Naive thymus-derived CD4-positive, alpha-beta T cell (primary cell): ENCODE measurements at regions of chr10 and their contacts with region 1.

Region 1: DNA sequence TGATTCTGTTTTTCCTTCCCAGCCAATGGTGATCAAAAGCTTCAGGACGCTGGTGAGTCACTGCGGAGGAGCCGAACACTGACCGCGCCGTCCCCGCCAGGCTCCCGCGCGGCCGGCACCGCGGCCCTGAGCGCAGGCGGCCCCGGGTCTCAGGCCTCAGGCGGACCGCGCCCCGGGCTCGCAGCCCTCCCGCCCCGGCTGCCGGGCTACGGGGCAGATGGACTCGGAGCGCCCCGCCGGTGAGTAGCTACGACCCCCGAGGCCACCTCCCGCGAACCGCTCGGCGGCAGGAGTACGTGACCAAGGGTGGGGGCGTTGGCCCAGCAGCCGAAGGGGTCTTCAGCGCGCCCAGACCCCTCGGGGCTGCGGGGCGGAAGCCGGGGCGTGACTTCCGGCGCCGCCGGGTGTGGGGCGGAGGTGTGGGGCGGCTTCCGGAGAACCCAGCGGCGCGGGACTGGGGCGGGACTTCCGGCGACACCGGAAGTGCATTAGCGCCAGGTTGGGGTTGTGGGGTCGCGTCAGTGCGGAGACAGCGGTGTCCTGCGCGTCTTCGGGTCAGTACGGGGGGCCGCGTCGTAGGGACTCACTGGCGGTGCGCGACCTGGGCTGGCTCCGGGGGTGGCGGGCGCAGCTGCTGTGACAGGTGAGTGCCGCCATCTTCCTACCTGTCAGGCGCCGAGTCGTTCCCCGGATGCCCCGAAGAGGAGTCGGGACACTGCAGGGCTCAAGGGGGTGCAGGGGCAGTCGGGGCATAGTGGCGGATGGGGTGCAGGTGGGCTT is at the start of gene WDR37:
- DNase-seq: peak; percentile 79 to 92 (median 87)
- ATAC-seq: peak; percentile 95
- H3K4me3 ChIP-seq: peak within 1 kb of the TSS; percentile 82
- H3K4me3 Mint-ChIP-seq: peak within 1 kb of the TSS; percentile 91 to 99 (median 94)
- H3K27ac ChIP-seq: peak within 1 kb of the TSS; percentile 88
- H3K27ac Mint-ChIP-seq: peak within 1 kb of the TSS; percentile 90 to 99 (median 93)
- H3K4me1 ChIP-seq: peaks cover 54 to 59% of the 10 kb centered on the region in 2 donors
- H3K4me1 Mint-ChIP-seq: peaks cover 52 to 90% (median 82%) of the 10 kb centered on the region in 7 donors
- H3K27me3 ChIP-seq: no peaks in the 10 kb centered on the region
- H3K27me3 Mint-ChIP-seq: no peaks in the 10 kb centered on the region
- total RNA-seq, gene WDR37: 30.3 to 52.6 (median 43.4) TPM

Region 2: DNA sequence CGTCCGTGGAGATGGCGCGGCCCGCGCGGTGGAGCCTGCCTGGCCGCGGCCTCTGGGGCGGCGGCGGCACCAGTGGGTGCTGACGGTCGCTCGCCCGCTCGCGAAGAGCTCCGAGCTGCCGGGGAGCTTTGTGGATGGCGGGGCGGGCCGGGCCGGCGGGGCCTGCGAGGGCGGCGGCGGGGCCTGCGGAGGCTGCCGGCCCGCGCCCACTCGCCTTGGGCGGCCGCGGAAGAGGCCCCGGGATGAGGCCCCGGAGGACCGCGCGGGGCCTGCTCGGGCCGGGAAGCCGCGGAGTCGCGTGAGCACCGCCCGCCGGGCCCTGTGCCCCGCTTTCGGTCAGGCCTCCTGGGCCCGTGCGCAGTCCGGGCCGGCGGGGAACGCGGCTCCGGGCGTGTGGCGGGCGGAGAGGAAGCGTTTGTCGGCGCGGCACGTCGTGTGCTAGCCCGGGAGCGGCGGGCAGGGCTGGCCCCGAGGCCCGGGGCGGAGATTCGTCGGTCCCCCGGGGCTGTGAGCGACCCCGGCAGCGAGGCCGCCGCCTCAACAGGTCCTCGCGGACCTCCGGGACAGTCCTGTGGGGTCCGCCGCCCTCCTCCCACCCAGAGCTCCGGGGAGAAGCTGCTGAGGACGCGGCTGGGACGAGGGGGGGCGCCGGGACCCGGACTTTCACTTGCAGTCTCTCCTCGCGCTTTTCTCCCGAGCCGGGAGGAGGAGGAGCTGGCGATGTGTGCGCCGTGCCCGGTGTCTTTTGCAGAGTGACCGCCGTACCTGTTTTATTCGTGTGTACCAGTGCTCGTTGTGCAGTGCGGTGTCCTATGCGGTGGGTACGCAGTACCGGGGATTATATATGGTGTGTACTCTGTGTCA is 920.7 kb before region 1 on chr10:
- CTCF ChIA-PET with region 1: interaction called, 4 read pairs
- POLR2A ChIA-PET with region 1: no interaction called
- intact Hi-C with region 1: loop called in 1 of 2 experiments (anchors 5 kb)
- DNase-seq: peak; percentile 54 to 77 (median 68)
- ATAC-seq: peak; percentile 67
- H3K4me3 ChIP-seq: peak overlapping the region; percentile 67
- H3K4me3 Mint-ChIP-seq: peak overlapping the region; percentile 86 to 96 (median 94)
- H3K27ac ChIP-seq: peak overlapping the region; percentile 90
- H3K27ac Mint-ChIP-seq: peak overlapping the region; percentile 82 to 96 (median 93)
- H3K4me1 ChIP-seq: peaks cover 16 to 17% of the 10 kb centered on the region in 2 donors
- H3K4me1 Mint-ChIP-seq: peaks cover 27 to 59% (median 49%) of the 10 kb centered on the region in 7 donors
- H3K27me3 ChIP-seq: no peaks in the 10 kb centered on the region
- H3K27me3 Mint-ChIP-seq: peaks cover 0 to 15% (median 0%) of the 10 kb centered on the region in 5 donors

Region 3: DNA sequence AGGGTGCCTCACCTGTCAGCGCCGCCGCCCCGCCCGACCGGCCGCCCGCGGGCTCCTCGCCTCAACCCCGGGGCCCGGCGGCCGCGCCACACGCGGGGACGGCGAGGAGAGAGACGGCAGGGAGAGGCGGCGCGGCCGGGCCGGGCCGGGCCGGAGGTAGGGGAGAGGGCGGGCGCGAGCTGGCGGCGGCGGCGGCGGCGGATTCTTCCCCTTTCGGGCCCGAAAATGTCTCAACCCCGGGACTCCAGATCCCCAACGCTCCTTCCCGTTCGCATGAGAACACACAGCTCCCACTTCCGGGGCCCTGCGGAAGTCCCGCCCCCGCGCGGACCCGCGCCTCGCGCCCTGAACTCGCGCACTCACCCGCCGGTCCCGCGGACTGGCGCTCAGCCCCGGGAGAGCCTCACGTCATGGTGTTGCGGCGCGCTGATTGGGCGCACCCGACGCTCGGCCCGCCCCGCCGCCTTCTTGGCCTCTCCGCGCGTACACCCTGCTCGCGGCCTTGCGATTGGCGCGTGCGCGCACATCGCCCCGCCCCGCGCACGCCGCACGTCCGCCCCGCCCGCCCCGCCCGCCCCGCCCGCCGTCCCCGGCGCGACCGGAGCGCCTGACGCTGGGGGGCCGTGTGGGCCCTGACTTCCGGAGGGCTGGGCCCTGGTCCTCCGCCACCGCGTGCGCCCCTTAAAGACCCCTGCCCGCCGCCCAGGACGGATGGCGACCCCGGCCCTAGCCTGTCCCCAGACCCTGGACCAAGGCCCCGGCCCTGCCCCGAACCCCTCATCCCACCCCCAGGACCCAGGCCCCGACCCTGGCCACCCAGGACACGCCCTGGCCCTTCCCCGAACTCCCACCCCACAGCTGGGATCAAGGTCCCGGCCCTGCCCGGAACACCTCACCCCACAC is 124.8 kb before region 1 on chr10 and contains the start of gene LARP4B:
- CTCF ChIA-PET with region 1: no interaction called
- POLR2A ChIA-PET with region 1: interaction called, 4 read pairs
- intact Hi-C with region 1: loop called in 1 of 2 experiments (anchors 1 kb)
- DNase-seq: peak; percentile 95 to 99 (median 98)
- ATAC-seq: peak; percentile 98
- H3K4me3 ChIP-seq: peak within 1 kb of the TSS; percentile 42
- H3K4me3 Mint-ChIP-seq: peak within 1 kb of the TSS; percentile 82 to 99 (median 94)
- H3K27ac ChIP-seq: peak within 1 kb of the TSS; percentile 96
- H3K27ac Mint-ChIP-seq: peak within 1 kb of the TSS; percentile 91 to 96 (median 94)
- H3K4me1 ChIP-seq: peaks cover 9 to 12% of the 10 kb centered on the region in 2 donors
- H3K4me1 Mint-ChIP-seq: peaks cover 26 to 48% (median 41%) of the 10 kb centered on the region in 7 donors
- H3K27me3 ChIP-seq: no peaks in the 10 kb centered on the region
- H3K27me3 Mint-ChIP-seq: no peaks in the 10 kb centered on the region
- total RNA-seq, gene LARP4B: 65.2 to 114 (median 96.9) TPM

Region 4: GRCh38 chr10:987870-988666 is 68.4 kb before region 1 on chr10 and contains the start of gene GTPBP4:
- CTCF ChIA-PET with region 1: interaction called, 3 read pairs
- POLR2A ChIA-PET with region 1: interaction called, 9 read pairs
- intact Hi-C with region 1: loop called (anchors 1 kb)
- DNase-seq: peak; percentile 88 to 98 (median 95)
- ATAC-seq: peak; percentile 99
- H3K4me3 ChIP-seq: peak within 1 kb of the TSS; percentile 90
- H3K4me3 Mint-ChIP-seq: peak within 1 kb of the TSS; percentile 95 to 98 (median 96)
- H3K27ac ChIP-seq: peak within 1 kb of the TSS; percentile 95
- H3K27ac Mint-ChIP-seq: peak within 1 kb of the TSS; percentile 88 to 99 (median 97)
- H3K4me1 ChIP-seq: peaks cover 18 to 19% of the 10 kb centered on the region in 2 donors
- H3K4me1 Mint-ChIP-seq: peaks cover 21 to 45% (median 40%) of the 10 kb centered on the region in 7 donors
- H3K27me3 ChIP-seq: no peaks in the 10 kb centered on the region
- H3K27me3 Mint-ChIP-seq: no peaks in the 10 kb centered on the region
- total RNA-seq, gene GTPBP4: 39.0 to 81.8 (median 45.2) TPM

Region 5: GRCh38 chr10:1043532-1043995 is 13.0 kb before region 1 on chr10:
- CTCF ChIA-PET with region 1: no interaction called
- POLR2A ChIA-PET with region 1: interaction called, 13 read pairs
- intact Hi-C with region 1: loop called (anchors 1 kb)
- DNase-seq: peak in 7 of 9 donors; percentile 22 to 51 (median 35)
- ATAC-seq: peak; percentile 49
- H3K4me3 ChIP-seq: peak overlapping the region; percentile 30
- H3K4me3 Mint-ChIP-seq: peak overlapping the region; percentile 70 to 86 (median 82)
- H3K27ac ChIP-seq: peak overlapping the region; percentile 54
- H3K27ac Mint-ChIP-seq: peak overlapping the region; percentile 68 to 96 (median 88)
- H3K4me1 ChIP-seq: peaks cover 27% of the 10 kb centered on the region in 2 donors
- H3K4me1 Mint-ChIP-seq: peaks cover 30 to 45% (median 42%) of the 10 kb centered on the region in 7 donors
- H3K27me3 ChIP-seq: no peaks in the 10 kb centered on the region
- H3K27me3 Mint-ChIP-seq: no peaks in the 10 kb centered on the region

Region 6: GRCh38 chr10:1074748-1075308 is 18.3 kb after region 1 on chr10:
- CTCF ChIA-PET with region 1: interaction called, 3 read pairs
- POLR2A ChIA-PET with region 1: interaction called, 3 read pairs
- intact Hi-C with region 1: loop called in 1 of 2 experiments (anchors 2 kb)
- DNase-seq: peak in 3 of 9 donors; percentile 7 to 23 (median 21)
- ATAC-seq: peak; percentile 34
- H3K4me3 ChIP-seq: no peak overlapping the region
- H3K4me3 Mint-ChIP-seq: peak overlapping the region in 1 of 10 donors; percentile 0
- H3K27ac ChIP-seq: no peak overlapping the region
- H3K27ac Mint-ChIP-seq: peak overlapping the region in 6 of 9 donors; percentile 9 to 83 (median 46)
- H3K4me1 ChIP-seq: peaks cover 3 to 4% of the 10 kb centered on the region in 2 donors
- H3K4me1 Mint-ChIP-seq: peaks cover 8 to 29% (median 21%) of the 10 kb centered on the region in 7 donors
- H3K27me3 ChIP-seq: no peaks in the 10 kb centered on the region
- H3K27me3 Mint-ChIP-seq: no peaks in the 10 kb centered on the region

Region 7: GRCh38 chr10:1142596-1142995 is 86.1 kb after region 1 on chr10:
- CTCF ChIA-PET with region 1: no interaction called
- POLR2A ChIA-PET with region 1: no interaction called
- intact Hi-C with region 1: no loop called
- DNase-seq: peak in 2 of 9 donors; percentile 17 to 19
- ATAC-seq: no peak
- H3K4me3 ChIP-seq: no peak overlapping the region
- H3K4me3 Mint-ChIP-seq: no peak overlapping the region
- H3K27ac ChIP-seq: no peak overlapping the region
- H3K27ac Mint-ChIP-seq: no peak overlapping the region
- H3K4me1 ChIP-seq: no peaks in the 10 kb centered on the region
- H3K4me1 Mint-ChIP-seq: no peaks in the 10 kb centered on the region
- H3K27me3 ChIP-seq: no peaks in the 10 kb centered on the region
- H3K27me3 Mint-ChIP-seq: peaks cover 7 to 40% (median 16%) of the 10 kb centered on the region in 5 donors